Caco-2 (cell line): ENCODE measurements at regions of chr6 and their contacts with region 1.

Region 1: GRCh38 chr6:160137989-160138835 is 16.6 kb downstream of the SLC22A1 start:
- DNase-seq: peak in 1 of 2 experiments; percentile 65
- H3K4me3 ChIP-seq: no peak overlapping the region
- H3K4me3 Mint-ChIP-seq: no peak overlapping the region
- H3K27ac Mint-ChIP-seq: no peak overlapping the region
- H3K4me1 ChIP-seq: peaks cover 17% of the 10 kb centered on the region
- H3K4me1 Mint-ChIP-seq: peaks cover 32% of the 10 kb centered on the region
- H3K27me3 ChIP-seq: no peaks in the 10 kb centered on the region
- H3K27me3 Mint-ChIP-seq: no peaks in the 10 kb centered on the region
- CTCF ChIP-seq: peak; percentile 75 to 80

Region 2: DNA sequence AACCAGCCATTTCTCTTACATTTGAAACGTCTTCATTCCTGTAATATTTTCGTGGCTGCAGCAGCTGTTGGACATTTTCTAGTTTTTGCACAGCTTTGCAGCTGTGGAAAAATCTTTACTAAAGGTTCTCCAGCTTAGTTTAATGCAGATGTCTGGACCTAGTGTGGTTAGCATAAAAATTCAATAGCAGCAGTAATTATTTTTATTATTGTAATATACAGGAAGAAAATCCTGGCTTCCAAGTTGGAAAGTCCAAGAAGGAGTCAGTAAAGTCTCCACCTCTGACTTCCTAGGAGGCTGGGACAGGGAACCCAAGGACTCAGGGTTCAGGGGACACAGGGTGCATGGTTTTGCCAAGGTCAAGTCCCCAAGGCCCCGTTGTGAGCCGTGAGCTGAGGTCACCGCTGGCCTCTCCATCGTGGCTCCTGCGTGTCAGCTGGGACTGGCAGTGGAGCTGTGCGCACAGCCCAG is 738.4 kb before region 1 on chr6:
- CTCF ChIA-PET with region 1: no interaction called
- POLR2A ChIA-PET with region 1: no interaction called
- intact Hi-C with region 1: no loop called
- DNase-seq: no peak
- H3K4me3 ChIP-seq: no peak overlapping the region
- H3K4me3 Mint-ChIP-seq: no peak overlapping the region
- H3K27ac Mint-ChIP-seq: no peak overlapping the region
- H3K4me1 ChIP-seq: no peaks in the 10 kb centered on the region
- H3K4me1 Mint-ChIP-seq: no peaks in the 10 kb centered on the region
- H3K27me3 ChIP-seq: no peaks in the 10 kb centered on the region
- H3K27me3 Mint-ChIP-seq: peaks cover 7% of the 10 kb centered on the region
- CTCF ChIP-seq: no peak

Region 3: GRCh38 chr6:160088069-160088783 is 50.0 kb before region 1 on chr6:
- CTCF ChIA-PET with region 1: no interaction called
- POLR2A ChIA-PET with region 1: no interaction called
- intact Hi-C with region 1: loop called (anchors 2 kb)
- DNase-seq: peak in 1 of 2 experiments; percentile 47
- H3K4me3 ChIP-seq: no peak overlapping the region
- H3K4me3 Mint-ChIP-seq: no peak overlapping the region
- H3K27ac Mint-ChIP-seq: no peak overlapping the region
- H3K4me1 ChIP-seq: no peaks in the 10 kb centered on the region
- H3K4me1 Mint-ChIP-seq: no peaks in the 10 kb centered on the region
- H3K27me3 ChIP-seq: no peaks in the 10 kb centered on the region
- H3K27me3 Mint-ChIP-seq: no peaks in the 10 kb centered on the region
- CTCF ChIP-seq: peak; percentile 51 to 84

Region 4: DNA sequence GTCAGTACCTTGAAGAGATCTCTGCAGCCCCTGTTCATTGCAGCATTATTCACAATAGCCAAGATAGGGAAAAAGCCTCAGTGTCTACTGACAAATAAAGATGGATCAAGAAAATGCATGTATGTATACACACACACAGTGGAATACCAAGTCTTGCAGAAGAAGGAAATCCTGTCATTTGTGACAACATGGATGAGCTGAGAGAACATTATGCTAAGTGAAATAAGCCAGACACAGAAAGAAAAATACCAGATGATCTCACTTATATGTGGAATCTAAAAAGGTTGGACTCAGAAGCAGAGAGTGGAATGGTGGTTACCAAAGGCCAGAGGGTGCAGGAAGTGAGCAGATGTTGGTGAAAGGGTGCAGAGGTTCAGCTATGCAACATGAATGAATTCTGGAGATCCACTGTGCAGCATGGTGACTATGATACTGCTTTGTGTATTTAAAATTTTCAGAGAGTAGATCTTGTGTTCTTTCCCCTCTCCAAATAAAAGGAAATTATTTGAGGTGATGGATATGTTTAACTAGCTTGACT is 27.6 kb before region 1 on chr6:
- CTCF ChIA-PET with region 1: no interaction called
- POLR2A ChIA-PET with region 1: no interaction called
- intact Hi-C with region 1: no loop called
- DNase-seq: no peak
- H3K4me3 ChIP-seq: no peak overlapping the region
- H3K4me3 Mint-ChIP-seq: no peak overlapping the region
- H3K27ac Mint-ChIP-seq: no peak overlapping the region
- H3K4me1 ChIP-seq: no peaks in the 10 kb centered on the region
- H3K4me1 Mint-ChIP-seq: no peaks in the 10 kb centered on the region
- H3K27me3 ChIP-seq: no peaks in the 10 kb centered on the region
- H3K27me3 Mint-ChIP-seq: no peaks in the 10 kb centered on the region
- CTCF ChIP-seq: no peak

Region 5: DNA sequence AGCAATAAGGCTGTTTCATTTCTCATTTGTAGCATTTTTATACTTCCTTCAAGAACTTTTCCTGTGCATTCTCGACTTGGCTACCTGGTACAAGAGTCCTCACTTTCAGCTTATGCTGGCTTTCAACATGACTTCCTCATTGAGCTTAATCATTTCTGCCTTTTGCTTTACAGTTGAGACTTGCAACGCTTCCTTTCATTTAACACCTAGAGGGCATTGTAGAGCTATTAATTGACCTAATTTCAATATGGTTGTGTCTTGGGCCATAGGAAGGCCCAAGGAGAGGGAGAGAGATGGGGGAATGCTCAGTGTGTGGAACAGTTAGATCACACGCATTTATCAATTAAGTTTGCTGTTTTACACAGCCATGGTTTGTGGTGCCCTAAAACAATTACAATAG is 83.2 kb after region 1 on chr6:
- CTCF ChIA-PET with region 1: interaction called, 16 read pairs
- POLR2A ChIA-PET with region 1: no interaction called
- intact Hi-C with region 1: loop called (anchors 1 kb)
- DNase-seq: peak in 1 of 2 experiments; percentile 15
- H3K4me3 ChIP-seq: no peak overlapping the region
- H3K4me3 Mint-ChIP-seq: no peak overlapping the region
- H3K27ac Mint-ChIP-seq: no peak overlapping the region
- H3K4me1 ChIP-seq: no peaks in the 10 kb centered on the region
- H3K4me1 Mint-ChIP-seq: peaks cover 11% of the 10 kb centered on the region
- H3K27me3 ChIP-seq: no peaks in the 10 kb centered on the region
- H3K27me3 Mint-ChIP-seq: no peaks in the 10 kb centered on the region
- CTCF ChIP-seq: peak in 1 of 2 experiments; percentile 12

Region 6: GRCh38 chr6:160297310-160297709 is 159.1 kb after region 1 on chr6:
- CTCF ChIA-PET with region 1: interaction called, 29 read pairs
- POLR2A ChIA-PET with region 1: no interaction called
- intact Hi-C with region 1: loop called (anchors 1 kb)
- DNase-seq: peak in 1 of 2 experiments; percentile 47
- H3K4me3 ChIP-seq: no peak overlapping the region
- H3K4me3 Mint-ChIP-seq: no peak overlapping the region
- H3K27ac Mint-ChIP-seq: no peak overlapping the region
- H3K4me1 ChIP-seq: no peaks in the 10 kb centered on the region
- H3K4me1 Mint-ChIP-seq: peaks cover 1% of the 10 kb centered on the region
- H3K27me3 ChIP-seq: no peaks in the 10 kb centered on the region
- H3K27me3 Mint-ChIP-seq: no peaks in the 10 kb centered on the region
- CTCF ChIP-seq: peak in 1 of 2 experiments; percentile 70

Region 7: GRCh38 chr6:160455541-160456213 is 317.5 kb after region 1 on chr6:
- CTCF ChIA-PET with region 1: interaction called, 18 read pairs
- POLR2A ChIA-PET with region 1: no interaction called
- intact Hi-C with region 1: loop called (anchors 1 kb)
- DNase-seq: peak; percentile 45 to 78
- H3K4me3 ChIP-seq: no peak overlapping the region
- H3K4me3 Mint-ChIP-seq: no peak overlapping the region
- H3K27ac Mint-ChIP-seq: no peak overlapping the region
- H3K4me1 ChIP-seq: no peaks in the 10 kb centered on the region
- H3K4me1 Mint-ChIP-seq: no peaks in the 10 kb centered on the region
- H3K27me3 ChIP-seq: no peaks in the 10 kb centered on the region
- H3K27me3 Mint-ChIP-seq: peaks cover 2% of the 10 kb centered on the region
- CTCF ChIP-seq: peak; percentile 86 to 96

Region 8: GRCh38 chr6:161257793-161258457 is 1119.7 kb after region 1 on chr6:
- CTCF ChIA-PET with region 1: no interaction called
- POLR2A ChIA-PET with region 1: no interaction called
- intact Hi-C with region 1: no loop called
- DNase-seq: no peak
- H3K4me3 ChIP-seq: no peak overlapping the region
- H3K4me3 Mint-ChIP-seq: no peak overlapping the region
- H3K27ac Mint-ChIP-seq: no peak overlapping the region
- H3K4me1 ChIP-seq: no peaks in the 10 kb centered on the region
- H3K4me1 Mint-ChIP-seq: peaks cover 6% of the 10 kb centered on the region
- H3K27me3 ChIP-seq: no peaks in the 10 kb centered on the region
- H3K27me3 Mint-ChIP-seq: no peaks in the 10 kb centered on the region
- CTCF ChIP-seq: no peak